Breast epithelium (tissue), 4 donors: ENCODE measurements at regions of chr20 and their contacts with region 1.

Region 1: DNA sequence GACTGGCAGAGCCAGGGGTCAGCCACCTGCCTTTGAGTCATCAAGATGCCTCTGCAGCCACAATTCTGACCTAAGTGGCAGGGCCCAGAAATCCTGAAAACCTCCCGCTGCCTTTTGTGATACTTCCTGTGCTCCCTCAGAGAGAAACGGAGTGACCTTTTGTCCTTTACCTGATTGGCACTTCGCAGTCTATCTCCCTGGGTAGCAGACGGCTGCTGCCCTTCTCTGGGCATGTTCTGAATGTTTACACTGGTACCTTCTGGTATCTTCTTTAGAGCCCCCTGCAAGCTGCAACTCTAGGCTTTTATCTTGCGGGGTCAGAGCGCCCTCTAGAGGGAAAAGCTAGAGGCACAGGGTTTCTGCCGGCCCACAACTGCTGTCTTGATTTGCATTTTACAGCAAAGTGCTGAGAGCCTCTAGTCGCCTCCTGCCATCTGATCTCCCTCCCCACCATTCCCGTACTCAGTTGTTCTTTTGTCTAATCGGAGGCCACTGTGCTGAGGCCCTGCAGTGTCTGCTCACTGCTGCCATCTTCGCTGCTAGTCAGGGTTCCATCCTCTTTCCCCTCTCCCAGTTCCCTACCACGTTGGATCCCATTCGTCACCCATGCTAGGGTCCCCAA is 26.9 kb downstream of the SPATA2 start:
- DNase-seq: peak in 1 of 2 donors; percentile 50
- H3K4me3 ChIP-seq: no peak overlapping the region
- H3K27ac ChIP-seq: peak overlapping the region in 1 of 2 donors; percentile 84
- H3K4me1 ChIP-seq: peaks cover 0 to 3% of the 10 kb centered on the region in 2 donors
- H3K27me3 ChIP-seq: no peaks in the 10 kb centered on the region
- CTCF ChIP-seq: peak; percentile 9 to 65 (median 58)
- POLR2A ChIP-seq: no peak

Region 2: DNA sequence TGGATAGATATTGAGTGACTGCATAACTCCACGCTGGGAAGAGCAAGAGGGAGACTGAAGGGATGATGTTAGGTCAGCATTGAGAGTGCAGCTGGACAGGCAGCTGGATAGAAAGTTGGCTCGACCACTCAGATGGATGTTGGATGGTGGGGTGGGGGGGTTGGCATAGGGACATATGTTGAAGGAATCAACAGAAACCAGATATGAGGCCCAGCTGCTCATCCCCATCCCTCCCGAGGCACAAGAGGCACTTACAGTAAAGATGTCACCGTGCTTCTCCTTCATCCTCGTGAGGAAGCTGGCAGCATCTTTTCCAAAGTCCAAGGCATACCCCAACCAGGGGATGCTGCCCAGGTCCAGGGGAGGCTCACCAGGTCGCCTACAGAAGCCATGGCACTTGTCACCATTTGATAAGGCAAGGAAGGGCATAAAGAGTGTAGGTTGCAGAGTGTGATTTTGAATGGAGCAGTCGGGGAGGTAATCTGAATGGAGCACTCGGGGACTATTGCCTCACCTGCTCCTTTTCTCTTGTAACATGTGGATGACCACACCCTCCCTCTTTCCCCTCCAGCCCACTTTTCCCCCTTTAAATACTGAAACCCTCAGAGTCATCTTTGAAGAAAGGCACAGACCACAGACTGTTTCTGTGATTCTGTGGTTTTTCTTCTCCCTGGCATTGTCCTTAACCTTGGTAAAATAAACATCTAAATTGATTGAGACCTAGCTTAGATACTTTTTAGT is 338.5 kb before region 1 on chr20:
- intact Hi-C with region 1: loop called (anchors 2 kb)
- DNase-seq: no peak
- H3K4me3 ChIP-seq: no peak overlapping the region
- H3K27ac ChIP-seq: no peak overlapping the region
- H3K4me1 ChIP-seq: no peaks in the 10 kb centered on the region
- H3K27me3 ChIP-seq: no peaks in the 10 kb centered on the region
- CTCF ChIP-seq: no peak
- POLR2A ChIP-seq: no peak

Region 3: DNA sequence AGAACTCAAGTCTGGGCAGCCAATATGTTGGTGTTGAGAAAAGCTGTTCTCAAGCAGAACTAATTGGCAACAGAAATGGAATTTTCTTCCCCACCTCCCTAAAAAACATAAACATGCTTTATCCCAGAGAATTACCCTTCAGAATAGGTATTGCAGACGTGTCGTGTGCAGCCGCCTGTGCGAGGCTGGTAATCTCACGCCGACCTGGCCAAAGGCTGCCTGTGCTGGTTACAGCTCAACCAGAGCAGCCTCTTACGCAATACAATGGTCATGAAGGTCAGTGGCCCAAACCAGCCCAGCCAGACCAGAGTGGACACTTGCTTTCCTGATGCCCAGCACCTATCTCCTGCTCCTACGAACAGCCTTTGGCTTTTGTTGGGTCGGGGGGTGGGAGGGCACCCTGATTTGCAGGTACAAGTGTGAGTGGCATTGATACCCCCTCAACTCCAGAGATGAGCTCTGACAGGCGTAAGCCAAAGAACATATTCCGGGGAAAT is 792.0 kb after region 1 on chr20:
- intact Hi-C with region 1: no loop called
- DNase-seq: no peak
- H3K4me3 ChIP-seq: no peak overlapping the region
- H3K27ac ChIP-seq: peak overlapping the region in 1 of 2 donors; percentile 64
- H3K4me1 ChIP-seq: no peaks in the 10 kb centered on the region
- H3K27me3 ChIP-seq: no peaks in the 10 kb centered on the region
- CTCF ChIP-seq: no peak
- POLR2A ChIP-seq: no peak